Endothelial cell of umbilical vein (primary cell): ENCODE measurements at regions of chr9 and their contacts with region 1.

Region 1: DNA sequence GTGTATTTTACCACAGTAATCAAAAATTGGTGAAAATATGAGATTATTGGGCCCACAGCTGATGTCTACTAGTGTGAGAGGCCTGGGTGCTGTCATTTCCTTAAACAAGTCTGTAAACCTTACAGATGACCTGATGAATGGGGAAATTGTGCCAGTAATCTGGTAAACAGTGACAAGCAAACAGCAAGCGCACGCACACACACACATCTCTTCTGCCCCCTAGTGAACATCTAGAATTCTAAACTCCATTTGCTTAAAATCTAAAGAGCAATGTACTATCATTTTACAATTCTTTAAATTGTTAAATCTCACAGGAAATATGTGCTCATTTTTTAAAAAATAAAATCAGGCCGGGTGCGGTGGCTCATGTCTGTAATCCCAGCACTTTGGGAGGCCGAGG is 7.5 kb upstream of the RAPGEF1 start:
- DNase-seq: peak; percentile 72
- H3K4me3 ChIP-seq: no peak overlapping the region
- H3K27ac ChIP-seq: no peak overlapping the region
- H3K4me1 ChIP-seq: no peaks in the 10 kb centered on the region
- H3K27me3 ChIP-seq: peaks cover 0 to 3% of the 10 kb centered on the region in 2 experiments
- CTCF ChIP-seq: peak; percentile 50 to 63
- POLR2A ChIP-seq: no peak

Region 2: GRCh38 chr9:131320031-131320685 is 427.2 kb before region 1 on chr9:
- CTCF ChIA-PET with region 1: no interaction called
- POLR2A ChIA-PET with region 1: no interaction called
- dilution Hi-C with region 1: no loop called
- intact Hi-C with region 1: no loop called
- DNase-seq: no peak
- H3K4me3 ChIP-seq: no peak overlapping the region
- H3K27ac ChIP-seq: no peak overlapping the region
- H3K4me1 ChIP-seq: no peaks in the 10 kb centered on the region
- H3K27me3 ChIP-seq: no peaks in the 10 kb centered on the region
- CTCF ChIP-seq: no peak
- POLR2A ChIP-seq: no peak

Region 3: DNA sequence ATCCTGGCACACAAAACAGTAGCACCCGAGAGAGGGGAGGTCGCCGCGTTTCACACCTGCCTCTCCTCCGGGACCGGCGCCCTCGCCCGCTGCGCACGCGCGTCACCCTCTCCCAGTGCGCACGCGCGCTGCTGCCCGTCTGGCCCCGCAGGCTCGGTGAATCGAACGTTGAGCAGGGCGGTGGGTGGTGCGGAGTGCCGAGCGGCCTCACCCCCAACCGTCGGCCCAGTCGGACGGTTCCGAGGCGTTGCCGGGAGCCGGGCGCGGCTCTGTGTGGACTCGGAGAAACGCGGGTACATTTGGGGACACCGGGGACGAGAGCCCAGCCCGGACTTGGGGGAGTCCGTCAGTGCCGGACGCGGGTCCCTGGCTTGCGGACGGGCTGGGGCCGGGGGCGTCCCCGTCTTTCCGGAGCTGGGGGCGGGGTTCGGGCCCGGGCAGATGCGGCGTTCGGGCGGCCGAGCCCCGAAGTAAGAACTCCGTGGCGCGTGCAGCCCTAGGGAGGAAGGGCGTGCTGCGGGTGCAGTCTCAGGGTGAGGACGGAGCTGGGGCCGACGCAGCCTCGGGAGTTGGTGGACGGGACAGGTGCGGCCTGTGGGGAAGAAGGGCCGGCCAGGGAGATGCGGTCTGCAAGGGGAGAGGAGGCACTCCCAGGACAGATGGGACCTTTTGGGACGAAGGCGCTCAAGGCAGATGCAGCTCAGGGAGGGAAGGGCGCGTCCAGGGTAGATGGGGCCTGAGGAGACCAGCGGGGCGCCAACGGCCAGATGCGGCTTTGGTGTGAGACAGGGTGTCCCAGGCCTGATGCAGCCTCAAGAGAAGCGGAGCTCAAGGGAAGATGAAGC is 244.4 kb before region 1 on chr9 and contains the start of gene POMT1:
- CTCF ChIA-PET with region 1: no interaction called
- POLR2A ChIA-PET with region 1: no interaction called
- dilution Hi-C with region 1: no loop called
- intact Hi-C with region 1: loop called (anchors 1 kb)
- DNase-seq: peak; percentile 86
- H3K4me3 ChIP-seq: peak within 1 kb of the TSS; percentile 61 to 72 (median 62)
- H3K27ac ChIP-seq: no peak within 1 kb of the TSS
- H3K4me1 ChIP-seq: peaks cover 10% of the 10 kb centered on the region
- H3K27me3 ChIP-seq: no peaks in the 10 kb centered on the region
- CTCF ChIP-seq: no peak
- POLR2A ChIP-seq: peak; percentile 68
- total RNA-seq, gene POMT1: 39.1 and 44.7 TPM in 2 replicates

Region 4: GRCh38 chr9:131809941-131810344 is 62.6 kb after region 1 on chr9:
- CTCF ChIA-PET with region 1: no interaction called
- POLR2A ChIA-PET with region 1: no interaction called
- dilution Hi-C with region 1: no loop called
- intact Hi-C with region 1: no loop called
- DNase-seq: no peak
- H3K4me3 ChIP-seq: no peak overlapping the region
- H3K27ac ChIP-seq: no peak overlapping the region
- H3K4me1 ChIP-seq: no peaks in the 10 kb centered on the region
- H3K27me3 ChIP-seq: peaks cover 0 to 2% of the 10 kb centered on the region in 2 experiments
- CTCF ChIP-seq: no peak
- POLR2A ChIP-seq: no peak